Activated CD8-positive, alpha-beta memory T cell treated with anti-CD3 and anti-CD28 coated beads, Interleukin-2, amount 10 ng/mL, durations not matched to agents 7 days and 5 days (primary cell): ENCODE measurements at regions of chr4 and their contacts with region 1.

Region 1: DNA sequence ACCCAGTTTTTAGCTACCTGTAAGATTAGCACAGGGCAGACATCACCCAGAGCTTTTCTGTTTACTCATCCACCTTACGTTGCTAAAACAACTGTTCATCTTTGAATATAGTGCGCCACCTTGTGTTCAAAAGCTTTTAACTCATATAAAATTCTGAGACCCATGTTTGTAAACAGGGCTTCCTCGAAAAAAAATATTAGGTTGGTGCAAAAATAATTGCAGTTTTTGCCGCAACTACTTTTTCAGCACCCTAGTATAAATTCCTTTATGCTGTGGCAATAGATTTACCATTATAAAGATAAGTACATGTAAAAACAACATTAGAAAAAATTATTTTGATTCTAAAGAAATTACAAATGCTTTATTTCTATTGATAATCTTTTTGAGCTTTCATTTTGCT is 147.9 kb downstream of the LRBA start:
- DNase-seq: no peak
- ATAC-seq: peak; percentile 82
- H3K4me3 Mint-ChIP-seq: no peak overlapping the region
- H3K27ac Mint-ChIP-seq: no peak overlapping the region
- H3K4me1 Mint-ChIP-seq: peaks cover 2% of the 10 kb centered on the region
- H3K27me3 Mint-ChIP-seq: no peaks in the 10 kb centered on the region

Region 2: DNA sequence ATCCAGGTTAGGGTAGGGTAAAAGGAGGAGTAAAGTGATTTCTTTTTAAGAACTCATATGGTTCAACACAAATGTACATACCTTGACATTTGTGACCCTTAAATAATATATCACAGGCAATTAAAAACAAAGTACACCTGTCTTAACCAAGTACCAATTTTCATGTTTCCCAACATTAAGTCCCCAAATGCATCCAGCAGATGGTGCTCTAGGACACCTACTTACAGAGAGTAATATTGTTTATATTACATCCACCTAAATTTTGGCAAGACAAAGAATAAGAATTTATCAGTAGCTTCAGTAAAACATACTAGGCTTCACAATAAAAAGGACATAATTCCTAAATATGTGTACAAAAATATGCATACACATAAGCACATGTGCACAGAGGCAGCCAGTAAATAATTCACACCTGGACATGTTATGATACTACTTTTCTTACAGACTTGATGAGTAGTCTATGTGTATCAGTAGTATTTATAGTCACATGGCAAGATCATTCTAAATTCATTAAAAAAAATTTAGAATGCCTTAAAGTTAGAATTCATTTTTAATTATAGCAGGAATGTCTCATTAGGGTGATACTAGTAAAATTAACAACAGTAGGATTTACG is 569.2 kb before region 1 on chr4:
- CTCF ChIA-PET with region 1: interaction called, 17 read pairs
- DNase-seq: peak; percentile 55
- ATAC-seq: no peak
- H3K4me3 Mint-ChIP-seq: no peak overlapping the region
- H3K27ac Mint-ChIP-seq: no peak overlapping the region
- H3K4me1 Mint-ChIP-seq: peaks cover 2% of the 10 kb centered on the region
- H3K27me3 Mint-ChIP-seq: no peaks in the 10 kb centered on the region

Region 3: DNA sequence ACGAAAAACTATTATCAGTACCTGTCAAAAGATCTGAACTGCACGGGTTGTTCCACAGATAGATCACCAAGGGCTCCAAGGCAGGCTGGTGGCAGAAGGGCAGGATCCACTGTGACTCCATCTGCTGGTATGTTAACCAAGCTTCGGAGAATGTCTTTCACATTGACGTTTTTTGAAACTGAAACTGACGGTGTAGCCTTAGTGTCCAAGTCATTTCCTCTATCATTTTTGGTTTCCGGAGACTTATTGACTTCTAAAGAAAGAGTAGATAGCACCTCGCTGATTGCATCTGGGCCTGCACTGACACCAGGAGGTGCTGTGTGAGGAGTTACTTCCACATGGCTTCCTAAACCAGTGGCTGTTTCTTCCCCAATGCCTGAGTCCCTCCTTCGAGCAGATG is 39.0 kb before region 1 on chr4:
- CTCF ChIA-PET with region 1: interaction called, 40 read pairs
- DNase-seq: peak; percentile 86
- ATAC-seq: peak; percentile 98
- H3K4me3 Mint-ChIP-seq: peak overlapping the region; percentile 80
- H3K27ac Mint-ChIP-seq: peak overlapping the region; percentile 96
- H3K4me1 Mint-ChIP-seq: peaks cover 43% of the 10 kb centered on the region
- H3K27me3 Mint-ChIP-seq: no peaks in the 10 kb centered on the region

Region 4: GRCh38 chr4:150855981-150856510 is 11.1 kb before region 1 on chr4:
- CTCF ChIA-PET with region 1: interaction called, 21 read pairs
- DNase-seq: no peak
- ATAC-seq: no peak
- H3K4me3 Mint-ChIP-seq: no peak overlapping the region
- H3K27ac Mint-ChIP-seq: no peak overlapping the region
- H3K4me1 Mint-ChIP-seq: no peaks in the 10 kb centered on the region
- H3K27me3 Mint-ChIP-seq: no peaks in the 10 kb centered on the region